ENCODE measurements at regions of chr14 and their contacts with region 1.

Region 1: GRCh38 chr14:76876076-76876475 is 49.9 kb downstream of the LRRC74A start:
- DNase-seq: peak; percentile 57
- ATAC-seq: peak; percentile 90
- H3K4me3 Mint-ChIP-seq: no peak overlapping the region
- H3K27ac Mint-ChIP-seq: no peak overlapping the region
- H3K4me1 Mint-ChIP-seq: peaks cover 1% of the 10 kb centered on the region
- H3K27me3 Mint-ChIP-seq: peaks cover 3% of the 10 kb centered on the region
- CTCF ChIP-seq: peak; percentile 78

Region 2: GRCh38 chr14:76701981-76702380 is 174.1 kb before region 1 on chr14:
- CTCF ChIA-PET with region 1: no interaction called
- POLR2A ChIA-PET with region 1: no interaction called
- intact Hi-C with region 1: no loop called
- DNase-seq: no peak
- ATAC-seq: no peak
- H3K4me3 Mint-ChIP-seq: no peak overlapping the region
- H3K27ac Mint-ChIP-seq: no peak overlapping the region
- H3K4me1 Mint-ChIP-seq: no peaks in the 10 kb centered on the region
- H3K27me3 Mint-ChIP-seq: peaks cover 4% of the 10 kb centered on the region
- CTCF ChIP-seq: no peak

Region 3: DNA sequence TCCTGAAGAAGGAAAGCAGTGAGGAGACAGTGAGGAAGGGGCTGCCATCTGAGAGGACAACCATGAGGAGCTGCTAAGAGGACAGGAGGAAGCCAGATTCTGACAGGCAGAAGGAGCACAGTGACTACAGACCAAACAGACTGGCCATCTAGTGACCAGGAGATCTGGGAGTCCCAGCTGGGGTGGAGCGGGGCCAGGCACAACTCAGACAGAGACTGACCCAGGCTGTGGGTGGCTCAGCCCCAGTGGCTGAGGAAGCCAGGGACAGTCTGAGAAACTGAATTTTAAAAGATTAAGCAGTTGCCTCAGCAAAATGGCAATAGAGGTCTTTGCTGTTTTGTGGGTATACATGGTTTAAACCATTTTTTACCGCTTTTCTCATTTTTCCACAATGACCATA is 21.0 kb before region 1 on chr14:
- CTCF ChIA-PET with region 1: interaction called, 21 read pairs
- POLR2A ChIA-PET with region 1: no interaction called
- intact Hi-C with region 1: no loop called
- DNase-seq: no peak
- ATAC-seq: no peak
- H3K4me3 Mint-ChIP-seq: no peak overlapping the region
- H3K27ac Mint-ChIP-seq: no peak overlapping the region
- H3K4me1 Mint-ChIP-seq: no peaks in the 10 kb centered on the region
- H3K27me3 Mint-ChIP-seq: no peaks in the 10 kb centered on the region
- CTCF ChIP-seq: no peak

Region 4: DNA sequence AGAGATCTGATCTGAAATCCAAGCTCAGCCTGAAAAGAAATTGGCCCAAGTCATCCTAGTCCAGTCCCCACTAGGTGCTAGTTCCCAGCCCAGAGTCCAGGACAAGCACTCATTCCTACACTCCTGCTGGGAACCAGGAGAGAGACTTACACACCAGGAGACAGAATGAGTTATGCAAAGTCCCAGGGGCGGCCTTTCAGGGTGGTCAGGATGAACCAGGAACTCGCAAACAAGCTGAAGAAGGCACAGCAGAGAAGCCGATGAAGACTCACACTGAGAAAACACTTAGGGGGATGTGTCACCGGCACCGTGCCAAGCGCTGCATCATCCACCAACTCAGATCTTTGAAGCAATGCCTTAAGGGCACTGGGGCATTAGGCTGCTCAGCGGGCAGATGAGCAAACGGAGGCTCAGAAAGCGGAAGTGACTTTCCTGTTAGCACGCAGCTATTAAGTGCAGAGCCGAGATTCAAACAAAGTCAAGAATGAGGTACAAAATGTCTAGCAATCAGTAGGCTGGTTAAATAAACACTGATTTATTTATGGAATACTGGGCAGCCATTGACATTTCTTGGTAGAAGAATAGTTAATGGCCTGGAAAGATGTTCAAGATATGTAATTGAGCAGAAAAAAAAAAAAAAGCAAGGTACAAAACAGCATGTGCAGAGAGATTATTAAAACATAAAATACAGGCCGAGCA is 28.8 kb after region 1 on chr14:
- CTCF ChIA-PET with region 1: interaction called, 17 read pairs
- POLR2A ChIA-PET with region 1: interaction called, 4 read pairs
- intact Hi-C with region 1: loop called (anchors 5 kb)
- DNase-seq: peak; percentile 95
- ATAC-seq: peak; percentile 93
- H3K4me3 Mint-ChIP-seq: no peak overlapping the region
- H3K27ac Mint-ChIP-seq: peak overlapping the region; percentile 76
- H3K4me1 Mint-ChIP-seq: peaks cover 18% of the 10 kb centered on the region
- H3K27me3 Mint-ChIP-seq: no peaks in the 10 kb centered on the region
- CTCF ChIP-seq: no peak

Region 5: GRCh38 chr14:76941946-76942805 is 66.1 kb after region 1 on chr14:
- CTCF ChIA-PET with region 1: interaction called, 12 read pairs
- POLR2A ChIA-PET with region 1: no interaction called
- intact Hi-C with region 1: no loop called
- DNase-seq: no peak
- ATAC-seq: peak; percentile 21
- H3K4me3 Mint-ChIP-seq: no peak overlapping the region
- H3K27ac Mint-ChIP-seq: no peak overlapping the region
- H3K4me1 Mint-ChIP-seq: peaks cover 19% of the 10 kb centered on the region
- H3K27me3 Mint-ChIP-seq: no peaks in the 10 kb centered on the region
- CTCF ChIP-seq: no peak

Region 6: DNA sequence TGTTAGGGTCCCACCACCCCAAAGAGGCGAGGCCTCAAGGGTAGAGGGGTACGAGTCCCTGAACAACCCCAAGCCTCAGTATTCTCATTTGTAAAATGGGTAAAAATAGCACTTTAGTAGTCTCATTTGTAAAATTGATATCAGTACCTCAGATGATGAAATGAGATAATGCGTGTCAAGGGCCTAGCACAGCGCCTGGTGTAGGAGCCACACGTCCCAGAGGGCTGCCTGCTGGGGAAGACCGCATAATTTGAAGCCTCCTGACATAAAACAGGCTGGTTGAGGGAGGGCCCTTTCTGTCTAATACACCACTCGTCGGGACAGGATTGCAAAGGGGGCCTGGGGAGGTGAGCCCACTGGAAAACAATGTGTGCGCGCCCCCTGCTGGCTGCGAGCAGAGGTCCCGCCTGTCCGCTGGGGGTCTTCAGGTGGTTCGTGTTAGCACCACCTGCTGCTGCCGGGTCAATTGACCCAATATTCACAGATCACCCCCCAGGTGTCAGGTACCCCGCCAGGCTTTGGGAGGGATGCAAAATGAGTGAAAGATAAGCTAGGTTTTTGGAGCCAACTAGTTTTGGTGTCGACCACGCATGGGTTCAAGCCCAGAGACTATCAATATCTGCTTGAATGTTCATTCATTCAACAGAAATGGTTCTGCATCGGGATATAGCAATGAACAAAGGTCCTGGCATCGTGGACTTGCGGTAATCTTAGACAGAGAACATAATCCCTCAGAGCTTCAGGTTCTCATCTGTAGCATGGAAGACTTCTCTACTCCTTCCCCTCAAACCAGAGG is 177.2 kb after region 1 on chr14:
- CTCF ChIA-PET with region 1: interaction called, 133 read pairs
- POLR2A ChIA-PET with region 1: no interaction called
- intact Hi-C with region 1: loop called (anchors 5 kb)
- DNase-seq: peak; percentile 90
- ATAC-seq: peak; percentile 93
- H3K4me3 Mint-ChIP-seq: no peak overlapping the region
- H3K27ac Mint-ChIP-seq: peak overlapping the region; percentile 75
- H3K4me1 Mint-ChIP-seq: peaks cover 17% of the 10 kb centered on the region
- H3K27me3 Mint-ChIP-seq: no peaks in the 10 kb centered on the region
- CTCF ChIP-seq: peak; percentile 100

Region 7: DNA sequence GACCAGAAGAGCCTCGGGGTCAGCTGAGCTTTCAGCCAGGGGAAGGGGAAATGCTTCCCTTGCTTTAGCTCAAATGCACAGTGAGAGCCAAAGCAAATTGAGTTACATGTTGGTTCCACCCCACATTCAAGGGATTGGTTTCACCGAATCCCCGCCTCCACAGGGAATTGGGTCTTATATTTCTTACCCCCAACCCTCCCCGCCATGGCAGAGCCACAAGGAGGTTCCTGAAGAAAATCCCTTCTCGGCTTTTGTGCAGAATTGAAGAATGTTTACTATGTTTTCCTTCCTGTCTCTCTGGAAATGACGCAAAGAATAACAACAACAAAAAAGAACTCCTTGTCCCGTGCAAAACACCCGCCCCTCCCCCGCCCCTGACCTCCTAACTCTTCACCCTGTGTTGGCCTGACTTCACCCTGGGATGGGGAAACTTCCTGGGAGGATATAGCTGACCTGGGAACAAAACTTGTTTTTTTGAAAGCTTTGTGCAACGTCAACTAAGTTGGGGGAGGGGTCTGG is 200.1 kb after region 1 on chr14:
- CTCF ChIA-PET with region 1: interaction called, 452 read pairs
- POLR2A ChIA-PET with region 1: no interaction called
- intact Hi-C with region 1: no loop called
- DNase-seq: no peak
- ATAC-seq: no peak
- H3K4me3 Mint-ChIP-seq: no peak overlapping the region
- H3K27ac Mint-ChIP-seq: no peak overlapping the region
- H3K4me1 Mint-ChIP-seq: no peaks in the 10 kb centered on the region
- H3K27me3 Mint-ChIP-seq: no peaks in the 10 kb centered on the region
- CTCF ChIP-seq: no peak

Measured in activated CD8-positive, alpha-beta T cell treated with anti-CD3 and anti-CD28 coated beads for 36 hours (primary cell).